H1 (cell line): ENCODE measurements at regions of chr2 and their contacts with region 1.

Region 1: GRCh38 chr2:65974067-65974723 is 460.7 kb upstream of the MEIS1 start:
- DNase-seq: no peak
- H3K4me3 ChIP-seq: no peak overlapping the region
- H3K27ac ChIP-seq: no peak overlapping the region
- H3K4me1 ChIP-seq: no peaks in the 10 kb centered on the region
- H3K27me3 ChIP-seq: peaks cover 0 to 3% (median 0%) of the 10 kb centered on the region in 4 experiments; a peak in 1 of 7 replicates
- CTCF ChIP-seq: peak in 1 of 3 experiments; percentile 51; a peak in 1 of 4 replicates
- EP300 ChIP-seq: no peak
- POLR2A ChIP-seq: no peak
- RAD21 ChIP-seq: peak; percentile 42 to 53; a peak in 3 of 4 replicates

Region 2: DNA sequence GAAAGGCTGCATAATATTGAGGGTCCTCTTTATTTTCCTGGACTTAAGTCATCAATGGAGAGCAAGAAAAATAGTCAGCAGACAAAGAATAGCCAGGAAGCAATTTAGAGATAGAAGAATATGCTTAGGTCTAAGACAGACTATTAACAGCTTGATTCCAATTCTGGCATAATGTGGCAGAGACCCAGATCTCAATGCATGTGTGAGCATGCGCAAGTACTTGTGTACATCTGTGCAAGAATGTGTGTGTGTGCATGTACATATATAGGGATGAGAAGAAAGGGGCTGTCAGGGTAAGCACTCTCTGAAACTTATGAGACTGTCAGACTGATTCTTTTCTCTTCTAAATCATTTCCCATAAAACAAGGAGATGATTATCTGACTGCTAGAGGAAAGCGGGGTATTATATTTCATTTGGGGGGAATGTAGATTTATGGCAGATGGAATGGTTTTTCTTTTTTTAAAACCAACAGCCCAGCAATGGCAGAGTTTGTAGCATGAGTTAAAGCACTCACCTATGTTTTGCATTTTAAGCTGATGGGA is 160.5 kb before region 1 on chr2:
- CTCF ChIA-PET with region 1: no interaction called
- POLR2A ChIA-PET with region 1: no interaction called
- DNase-seq: no peak
- H3K4me3 ChIP-seq: no peak overlapping the region
- H3K27ac ChIP-seq: no peak overlapping the region
- H3K4me1 ChIP-seq: 0 out of 7 replicates have a peak, but pooled peaks cover 0 to 2% (median 0%) of the 10 kb centered on the region in 4 experiments
- H3K27me3 ChIP-seq: no peaks in the 10 kb centered on the region
- CTCF ChIP-seq: no peak
- EP300 ChIP-seq: no peak
- POLR2A ChIP-seq: no peak
- RAD21 ChIP-seq: no peak

Region 3: DNA sequence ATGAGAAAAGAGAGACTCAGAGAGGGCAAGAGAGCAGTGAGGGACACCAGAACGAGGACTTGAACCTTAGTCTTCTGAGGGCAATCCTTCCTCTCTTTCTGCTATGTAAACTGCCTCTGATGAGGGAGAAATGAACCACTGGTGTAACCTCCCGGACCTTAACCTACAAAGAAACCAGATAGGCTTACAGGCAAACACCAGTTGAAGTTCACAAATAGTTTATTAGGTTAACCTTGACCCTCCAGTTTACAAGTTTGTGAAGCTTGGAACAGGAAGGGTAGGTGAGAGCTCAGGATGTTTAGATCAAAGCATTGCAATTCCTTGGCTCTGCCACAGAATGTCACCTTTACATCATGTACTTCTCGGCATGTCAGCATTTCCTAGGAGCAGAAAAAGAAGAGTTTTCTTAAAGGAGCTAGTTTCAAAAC is 55.4 kb before region 1 on chr2:
- CTCF ChIA-PET with region 1: interaction called, 10 read pairs
- POLR2A ChIA-PET with region 1: interaction called, 3 read pairs
- DNase-seq: no peak
- H3K4me3 ChIP-seq: no peak overlapping the region
- H3K27ac ChIP-seq: no peak overlapping the region
- H3K4me1 ChIP-seq: peaks cover 0 to 2% (median 0%) of the 10 kb centered on the region in 4 experiments; a peak in 1 of 7 replicates
- H3K27me3 ChIP-seq: no peaks in the 10 kb centered on the region
- CTCF ChIP-seq: peak in 2 of 3 experiments; percentile 15 to 52; a peak in 2 of 4 replicates
- EP300 ChIP-seq: no peak
- POLR2A ChIP-seq: no peak
- RAD21 ChIP-seq: peak; percentile 74 to 82